Ovary (tissue), 10 donors: ENCODE measurements at regions of chr17 and their contacts with region 1.

Region 1: DNA sequence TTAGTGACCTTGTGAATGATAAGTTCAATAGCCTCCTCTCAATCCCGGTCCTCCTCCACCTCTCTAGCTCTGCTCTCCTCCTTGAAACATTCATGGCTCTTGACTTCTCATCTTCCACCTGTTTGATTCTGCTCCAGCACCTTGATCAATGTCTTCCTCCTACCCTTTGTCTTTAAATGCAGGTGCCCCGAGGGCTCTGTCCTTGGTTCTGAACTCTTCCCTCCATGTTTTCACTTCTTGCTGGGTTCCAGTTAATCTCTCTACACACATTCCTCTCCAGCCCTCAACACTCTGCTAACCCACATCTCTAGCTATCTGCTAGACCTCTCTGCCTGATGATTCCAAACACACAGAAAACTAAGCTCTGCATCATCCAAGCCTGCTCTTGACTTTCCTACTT is 13.4 kb downstream of the CD300E start:
- DNase-seq: no peak
- H3K4me3 ChIP-seq: no peak overlapping the region
- H3K27ac ChIP-seq: no peak overlapping the region
- H3K4me1 ChIP-seq: no peaks in the 10 kb centered on the region
- H3K27me3 ChIP-seq: no peaks in the 10 kb centered on the region
- CTCF ChIP-seq: no peak
- EP300 ChIP-seq: no peak
- POLR2A ChIP-seq: no peak

Region 2: DNA sequence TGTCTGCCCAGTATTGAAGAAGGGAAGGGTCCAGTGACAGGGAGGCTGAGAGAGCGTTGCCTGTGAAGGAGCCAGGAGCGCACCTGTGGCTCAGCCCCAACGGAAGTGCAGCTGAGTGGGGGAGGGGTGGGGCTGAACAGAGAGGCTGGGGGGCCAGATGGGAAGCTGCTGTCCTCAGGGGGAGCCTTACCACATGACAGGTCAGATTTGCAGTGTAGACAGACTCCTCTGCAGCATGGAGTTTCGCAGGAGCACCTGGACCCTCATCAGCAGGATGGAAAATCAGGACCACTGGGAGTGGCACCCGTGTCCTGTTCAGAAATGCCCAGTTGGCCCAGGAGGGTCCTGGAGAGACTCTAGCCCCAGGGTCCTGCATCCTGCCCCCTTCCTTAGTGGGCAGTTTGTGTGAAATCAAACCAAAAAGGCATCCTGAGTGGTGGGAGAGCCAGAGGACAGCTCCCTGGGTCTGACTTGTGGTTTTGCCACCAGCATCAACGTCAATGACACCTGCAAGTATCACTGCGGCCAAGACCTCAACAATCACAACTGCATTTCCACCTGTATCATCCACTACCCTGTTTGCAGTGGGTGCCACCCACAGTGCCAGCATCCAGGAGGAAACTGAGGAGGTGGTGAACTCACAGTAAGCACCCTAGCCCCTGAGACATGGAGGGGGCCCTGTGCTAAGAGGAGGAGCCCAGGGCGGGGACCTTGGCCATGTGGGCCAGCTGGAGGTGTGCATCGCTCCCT is 135.9 kb before region 1 on chr17:
- intact Hi-C with region 1: no loop called
- DNase-seq: no peak
- H3K4me3 ChIP-seq: no peak overlapping the region
- H3K27ac ChIP-seq: no peak overlapping the region
- H3K4me1 ChIP-seq: no peaks in the 10 kb centered on the region
- H3K27me3 ChIP-seq: no peaks in the 10 kb centered on the region
- CTCF ChIP-seq: no peak
- EP300 ChIP-seq: no peak
- POLR2A ChIP-seq: no peak

Region 3: GRCh38 chr17:74485022-74485743 is 124.9 kb before region 1 on chr17:
- intact Hi-C with region 1: no loop called
- DNase-seq: no peak
- H3K4me3 ChIP-seq: no peak overlapping the region
- H3K27ac ChIP-seq: no peak overlapping the region
- H3K4me1 ChIP-seq: no peaks in the 10 kb centered on the region
- H3K27me3 ChIP-seq: no peaks in the 10 kb centered on the region
- CTCF ChIP-seq: no peak
- EP300 ChIP-seq: no peak
- POLR2A ChIP-seq: no peak

Region 4: GRCh38 chr17:74552037-74552436 is 58.1 kb before region 1 on chr17:
- intact Hi-C with region 1: loop called in 1 of 4 experiments (anchors 10 kb)
- DNase-seq: no peak
- H3K4me3 ChIP-seq: no peak overlapping the region
- H3K27ac ChIP-seq: no peak overlapping the region
- H3K4me1 ChIP-seq: no peaks in the 10 kb centered on the region
- H3K27me3 ChIP-seq: no peaks in the 10 kb centered on the region
- CTCF ChIP-seq: no peak
- EP300 ChIP-seq: no peak
- POLR2A ChIP-seq: no peak

Region 5: GRCh38 chr17:74697515-74697914 is 87.4 kb after region 1 on chr17:
- intact Hi-C with region 1: no loop called
- DNase-seq: no peak
- H3K4me3 ChIP-seq: no peak overlapping the region
- H3K27ac ChIP-seq: no peak overlapping the region
- H3K4me1 ChIP-seq: no peaks in the 10 kb centered on the region
- H3K27me3 ChIP-seq: no peaks in the 10 kb centered on the region
- CTCF ChIP-seq: no peak
- EP300 ChIP-seq: no peak
- POLR2A ChIP-seq: no peak